Cardiac septum (tissue), 1 donor: ENCODE measurements at regions of chr18 and their contacts with region 1.

Region 1: GRCh38 chr18:54679318-54680149 is 88.5 kb downstream of the DYNAP start:
- DNase-seq: no peak

Region 2: GRCh38 chr18:54392543-54393023 is 287.0 kb before region 1 on chr18:
- intact Hi-C with region 1: loop called (anchors 10 kb)
- DNase-seq: no peak

Region 3: GRCh38 chr18:54433857-54434256 is 245.7 kb before region 1 on chr18:
- intact Hi-C with region 1: no loop called
- DNase-seq: no peak

Region 4: GRCh38 chr18:54616220-54616848 is 63.2 kb before region 1 on chr18:
- intact Hi-C with region 1: no loop called
- DNase-seq: no peak

Region 5: GRCh38 chr18:55119434-55119833 is 439.9 kb after region 1 on chr18:
- intact Hi-C with region 1: no loop called
- DNase-seq: no peak